B cell (primary cell): ENCODE measurements at regions of chr13 and their contacts with region 1.

Region 1: GRCh38 chr13:74104661-74105275 is 29.4 kb downstream of the KLF12 start:
- DNase-seq: no peak
- ATAC-seq: no peak
- H3K4me3 ChIP-seq: no peak overlapping the region
- H3K4me3 Mint-ChIP-seq: no peak overlapping the region
- H3K27ac ChIP-seq: no peak overlapping the region
- H3K27ac Mint-ChIP-seq: no peak overlapping the region
- H3K4me1 ChIP-seq: peaks cover 10 to 13% of the 10 kb centered on the region in 2 donors
- H3K4me1 Mint-ChIP-seq: peaks cover 51% of the 10 kb centered on the region
- H3K27me3 ChIP-seq: no peaks in the 10 kb centered on the region
- H3K27me3 Mint-ChIP-seq: no peaks in the 10 kb centered on the region
- CTCF ChIP-seq: no peak

Region 2: GRCh38 chr13:74070065-74070464 is 34.7 kb before region 1 on chr13:
- CTCF ChIA-PET with region 1: no interaction called
- POLR2A ChIA-PET with region 1: no interaction called
- intact Hi-C with region 1: loop called (anchors 5 kb)
- DNase-seq: peak; percentile 17
- ATAC-seq: no peak
- H3K4me3 ChIP-seq: no peak overlapping the region
- H3K4me3 Mint-ChIP-seq: peak overlapping the region; percentile 13
- H3K27ac ChIP-seq: peak overlapping the region in 1 of 2 donors; percentile 58
- H3K27ac Mint-ChIP-seq: peak overlapping the region; percentile 76
- H3K4me1 ChIP-seq: peaks cover 16 to 42% of the 10 kb centered on the region in 2 donors
- H3K4me1 Mint-ChIP-seq: peaks cover 70% of the 10 kb centered on the region
- H3K27me3 ChIP-seq: no peaks in the 10 kb centered on the region
- H3K27me3 Mint-ChIP-seq: no peaks in the 10 kb centered on the region
- CTCF ChIP-seq: no peak

Region 3: DNA sequence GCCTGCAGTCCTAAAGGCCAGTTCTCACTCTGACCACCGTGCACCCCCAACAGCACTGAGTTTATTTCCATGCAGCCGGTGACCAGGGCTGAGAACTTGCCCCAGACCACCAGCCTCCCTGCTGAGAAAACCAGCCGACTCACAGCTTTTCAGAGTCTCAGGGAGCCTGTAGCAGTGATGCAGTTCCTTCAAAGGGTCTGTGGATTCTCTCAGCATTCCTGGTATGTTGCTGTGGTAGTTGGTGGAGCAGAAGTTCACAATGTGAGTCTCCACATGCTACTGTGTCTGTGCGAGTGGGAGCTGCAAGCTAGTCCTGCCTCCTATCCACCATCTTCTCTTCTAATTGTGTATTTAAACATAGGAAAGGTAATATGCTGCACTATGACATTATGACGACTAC is 284.3 kb after region 1 on chr13:
- CTCF ChIA-PET with region 1: no interaction called
- POLR2A ChIA-PET with region 1: no interaction called
- intact Hi-C with region 1: no loop called
- DNase-seq: no peak
- ATAC-seq: no peak
- H3K4me3 ChIP-seq: no peak overlapping the region
- H3K4me3 Mint-ChIP-seq: no peak overlapping the region
- H3K27ac ChIP-seq: no peak overlapping the region
- H3K27ac Mint-ChIP-seq: no peak overlapping the region
- H3K4me1 ChIP-seq: no peaks in the 10 kb centered on the region
- H3K4me1 Mint-ChIP-seq: no peaks in the 10 kb centered on the region
- H3K27me3 ChIP-seq: no peaks in the 10 kb centered on the region
- H3K27me3 Mint-ChIP-seq: peaks cover 18% of the 10 kb centered on the region
- CTCF ChIP-seq: no peak